Cardiac septum (tissue), 1 donor: ENCODE measurements at regions of chr18 and their contacts with region 1.

Region 1: DNA sequence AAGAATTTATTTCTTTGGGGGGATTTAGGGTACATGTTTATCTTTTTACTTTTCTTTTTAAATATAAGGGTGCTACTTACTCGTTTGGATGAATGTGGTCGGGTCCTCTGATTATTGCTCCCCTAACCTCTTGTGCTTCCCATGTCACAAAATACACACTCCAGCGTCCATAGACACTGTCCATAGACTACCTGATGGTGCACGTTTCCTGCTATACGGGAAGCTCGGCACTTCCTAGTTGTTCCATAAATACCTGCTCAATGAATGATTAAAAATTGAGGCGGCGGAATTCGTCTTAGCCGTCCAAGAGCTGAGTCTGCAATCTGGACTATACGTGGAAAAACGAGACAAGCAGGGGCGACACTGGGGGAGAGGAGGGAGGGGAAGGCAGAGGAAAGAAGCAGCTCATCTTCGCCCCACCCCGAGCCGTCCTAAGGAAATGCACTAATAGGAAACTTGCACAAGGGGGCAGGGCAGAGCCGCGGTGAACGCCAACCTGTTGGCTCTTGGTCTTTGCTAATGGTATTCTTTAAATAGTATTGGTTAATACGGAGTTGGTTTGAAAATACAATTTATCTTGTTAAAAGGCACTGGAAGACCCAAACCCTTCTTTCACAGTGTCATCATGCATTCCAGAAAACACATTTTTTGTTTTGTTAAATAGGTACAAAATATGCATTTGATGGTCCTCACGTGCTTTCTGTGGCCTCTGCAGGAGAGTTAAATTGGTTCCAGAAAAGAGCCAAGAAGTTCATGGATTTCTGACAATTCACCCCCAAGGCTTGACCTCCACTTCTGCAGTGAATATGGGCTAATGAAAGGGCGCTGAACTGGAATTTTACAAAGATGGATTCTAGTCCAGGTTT is 73.0 kb upstream of the KCTD1 start:
- DNase-seq: no peak

Region 2: DNA sequence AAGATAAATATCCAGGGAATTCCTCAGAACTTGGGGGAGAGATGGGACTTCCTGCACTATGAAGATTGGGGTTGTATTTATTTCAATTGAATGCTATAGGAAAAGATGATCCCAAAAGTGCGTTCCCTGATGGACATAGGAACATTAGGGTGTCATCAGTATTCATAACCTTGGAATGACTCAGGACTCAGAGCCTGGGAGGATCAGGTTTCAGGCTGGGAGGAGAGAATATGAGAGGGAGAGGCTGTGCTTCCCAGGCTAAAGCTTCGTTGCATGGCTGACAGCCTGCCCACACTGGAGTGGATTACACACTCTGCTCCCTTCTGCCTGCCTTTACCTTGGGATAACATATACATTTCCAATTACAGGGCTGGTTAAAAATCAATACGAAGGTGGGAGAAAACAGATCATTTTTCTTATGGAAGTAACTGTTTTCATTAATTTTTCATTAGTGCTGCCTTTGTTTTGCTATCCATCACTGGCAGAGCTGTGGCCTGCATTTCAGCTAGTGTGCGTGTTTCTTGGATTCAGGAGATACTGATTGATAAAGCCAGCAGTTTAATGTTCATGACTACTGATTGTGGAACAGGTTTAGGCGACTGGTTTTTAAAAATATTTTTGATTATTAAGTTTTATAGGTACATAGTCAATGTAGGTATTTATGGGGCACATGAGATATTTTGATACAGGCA is 191.7 kb before region 1 on chr18:
- intact Hi-C with region 1: no loop called
- DNase-seq: peak; percentile 50

Region 3: DNA sequence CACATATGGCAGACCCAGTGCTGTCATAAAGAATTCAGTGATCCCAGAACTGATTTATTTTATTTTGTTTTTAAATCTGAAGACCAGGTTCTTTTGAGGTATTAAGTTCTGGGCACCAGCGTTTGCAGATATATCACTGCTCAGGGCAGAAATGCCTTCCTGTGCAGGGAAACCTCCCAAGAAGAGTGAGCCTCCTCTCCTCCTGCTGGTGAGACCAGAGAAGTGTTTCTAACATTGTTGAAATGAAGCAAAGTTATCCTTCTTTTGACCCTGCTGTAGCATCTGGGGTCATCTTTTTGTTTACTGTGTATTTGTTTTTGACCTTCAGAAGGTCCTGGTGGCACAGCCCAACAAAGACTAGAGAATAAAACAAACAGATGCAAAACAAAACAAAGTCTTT is 150.1 kb after region 1 on chr18:
- intact Hi-C with region 1: loop called (anchors 5 kb)
- DNase-seq: no peak